ENCODE measurements at regions of chr15 and their contacts with region 1.

Region 1: DNA sequence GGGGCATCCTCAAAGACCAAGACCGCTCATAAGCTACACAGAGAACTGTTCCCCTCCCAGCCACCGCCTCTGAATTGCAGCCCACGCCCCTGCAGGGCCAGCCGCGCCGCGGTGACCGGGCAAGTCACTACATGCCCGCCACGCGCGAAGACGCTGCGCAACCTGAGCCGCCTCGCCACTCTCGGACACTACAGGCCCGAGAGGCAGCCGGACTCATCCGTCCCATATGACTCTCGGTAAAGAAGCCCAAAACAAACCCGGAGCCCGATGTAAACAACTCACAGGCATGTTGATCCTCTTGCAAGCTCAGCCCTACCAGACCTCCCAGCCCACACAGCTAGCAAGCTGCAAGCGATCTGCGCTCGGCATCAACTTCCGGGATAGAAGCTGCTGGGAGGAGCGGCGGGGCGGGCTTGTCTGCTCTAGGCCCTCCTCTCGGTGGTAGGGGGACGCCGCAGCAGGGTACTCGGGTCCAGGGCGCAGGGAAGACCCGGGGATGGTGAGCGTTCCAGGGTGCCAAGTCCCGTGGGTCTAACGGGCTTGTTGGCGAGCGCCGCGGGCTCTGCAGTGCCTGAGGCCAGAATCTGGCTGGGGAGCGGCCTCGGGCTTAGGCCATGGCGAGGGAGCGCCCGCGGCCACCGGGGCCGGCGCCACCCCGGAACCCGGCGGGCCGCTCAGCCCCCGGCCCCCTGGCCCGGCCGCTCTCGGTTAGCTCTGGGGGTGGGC is at the start of gene RPS27L:
- H3K4me3 Mint-ChIP-seq: peak within 1 kb of the TSS; percentile 94
- H3K27ac Mint-ChIP-seq: peak within 1 kb of the TSS; percentile 96
- H3K4me1 Mint-ChIP-seq: peaks cover 10% of the 10 kb centered on the region
- H3K27me3 Mint-ChIP-seq: no peaks in the 10 kb centered on the region

Region 2: DNA sequence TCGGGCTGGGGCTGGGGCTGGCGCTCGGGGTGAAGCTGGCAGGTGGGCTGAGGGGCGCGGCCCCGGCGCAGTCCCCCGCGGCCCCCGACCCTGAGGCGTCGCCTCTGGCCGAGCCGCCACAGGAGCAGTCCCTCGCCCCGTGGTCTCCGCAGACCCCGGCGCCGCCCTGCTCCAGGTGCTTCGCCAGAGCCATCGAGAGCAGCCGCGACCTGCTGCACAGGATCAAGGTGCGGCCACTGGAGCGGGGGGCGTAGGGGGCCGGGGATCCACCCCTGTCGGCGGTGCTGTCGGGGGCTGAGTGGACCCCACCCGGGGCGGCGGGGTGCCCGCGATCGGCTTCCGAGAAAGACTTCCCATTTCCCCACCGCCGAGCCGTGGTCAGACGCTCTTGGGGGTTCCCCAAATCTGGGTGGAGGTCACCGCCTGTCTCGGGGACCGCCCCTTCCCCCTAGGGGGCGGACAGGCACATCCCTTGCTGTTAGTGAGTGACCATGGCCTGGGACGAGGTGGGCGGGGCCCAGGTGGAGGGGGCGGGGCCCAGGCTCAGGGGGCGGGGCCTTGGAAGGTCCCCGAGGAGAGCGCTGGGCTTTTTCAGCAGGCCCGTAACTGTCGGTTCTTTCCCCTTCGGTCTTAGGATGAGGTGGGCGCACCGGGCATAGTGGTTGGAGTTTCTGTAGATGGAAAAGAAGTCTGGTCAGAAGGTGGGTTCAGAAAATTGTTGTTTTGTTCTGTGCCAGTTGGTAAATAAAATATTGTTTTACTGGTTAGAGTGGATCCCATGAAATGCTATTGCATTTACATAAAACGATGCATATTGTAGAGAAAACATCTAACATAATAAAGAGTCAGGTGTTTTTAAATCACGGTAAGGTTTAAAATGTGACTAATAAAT is 35.0 kb before region 1 on chr15:
- intact Hi-C with region 1: loop called (anchors 1 kb)
- H3K4me3 Mint-ChIP-seq: peak overlapping the region; percentile 80
- H3K27ac Mint-ChIP-seq: peak overlapping the region; percentile 83
- H3K4me1 Mint-ChIP-seq: peaks cover 35% of the 10 kb centered on the region
- H3K27me3 Mint-ChIP-seq: no peaks in the 10 kb centered on the region

Region 3: GRCh38 chr15:63246691-63247464 is 89.6 kb after region 1 on chr15:
- intact Hi-C with region 1: loop called (anchors 5 kb)
- H3K4me3 Mint-ChIP-seq: no peak overlapping the region
- H3K27ac Mint-ChIP-seq: peak overlapping the region; percentile 65
- H3K4me1 Mint-ChIP-seq: peaks cover 39% of the 10 kb centered on the region
- H3K27me3 Mint-ChIP-seq: no peaks in the 10 kb centered on the region

Region 4: DNA sequence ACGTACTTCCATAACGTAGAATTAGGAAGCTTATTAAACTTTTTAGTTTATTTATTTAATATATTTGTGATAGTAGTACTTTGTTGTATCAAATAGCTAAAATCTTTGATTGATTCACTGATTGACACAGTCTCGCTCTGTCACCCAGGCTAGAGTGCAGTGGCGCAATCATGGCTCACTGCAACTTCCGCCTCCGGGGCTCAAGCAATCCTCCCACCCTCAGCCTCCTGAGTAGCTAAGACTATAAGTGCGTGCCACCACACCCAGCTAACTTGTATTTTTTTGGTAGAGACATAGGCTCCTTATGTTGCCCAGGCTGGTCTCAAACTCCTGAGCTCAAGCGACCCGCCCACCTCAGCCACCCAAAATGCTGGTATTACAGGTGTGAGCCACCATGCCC is 125.8 kb after region 1 on chr15:
- intact Hi-C with region 1: loop called (anchors 5 kb)
- H3K4me3 Mint-ChIP-seq: no peak overlapping the region
- H3K27ac Mint-ChIP-seq: peak overlapping the region; percentile 92
- H3K4me1 Mint-ChIP-seq: peaks cover 36% of the 10 kb centered on the region
- H3K27me3 Mint-ChIP-seq: no peaks in the 10 kb centered on the region